ENCODE measurements at regions of chr19 and their contacts with region 1.

Region 1: GRCh38 chr19:13150187-13150930 is at the starts of genes IER2 and STX10:
- DNase-seq: peak; percentile 84 to 95 (median 91)
- ATAC-seq: peak; percentile 54 to 60
- H3K4me3 Mint-ChIP-seq: peak within 1 kb of the TSS; percentile 93 to 99 (median 98)
- H3K27ac Mint-ChIP-seq: peak within 1 kb of the TSS; percentile 92 to 100 (median 98)
- H3K4me1 Mint-ChIP-seq: peaks cover 23 to 44% (median 27%) of the 10 kb centered on the region in 4 donors
- H3K27me3 Mint-ChIP-seq: peaks cover 0 to 3% (median 0%) of the 10 kb centered on the region in 5 donors
- polyA plus RNA-seq, gene IER2: 100 to 162 (median 107) TPM
- polyA plus RNA-seq, gene STX10: 36.1 to 56.2 (median 50.2) TPM

Region 2: GRCh38 chr19:12867120-12868099 is 282.9 kb before region 1 on chr19:
- POLR2A ChIA-PET with region 1: no interaction called
- DNase-seq: peak; percentile 46 to 86 (median 75)
- ATAC-seq: peak; percentile 86 to 89
- H3K4me3 Mint-ChIP-seq: peak overlapping the region; percentile 77 to 94 (median 88)
- H3K27ac Mint-ChIP-seq: peak overlapping the region in 8 of 10 donors; percentile 37 to 92 (median 72)
- H3K4me1 Mint-ChIP-seq: peaks cover 11 to 15% (median 12%) of the 10 kb centered on the region in 4 donors
- H3K27me3 Mint-ChIP-seq: peaks cover 0 to 5% (median 0%) of the 10 kb centered on the region in 5 donors

Region 3: DNA sequence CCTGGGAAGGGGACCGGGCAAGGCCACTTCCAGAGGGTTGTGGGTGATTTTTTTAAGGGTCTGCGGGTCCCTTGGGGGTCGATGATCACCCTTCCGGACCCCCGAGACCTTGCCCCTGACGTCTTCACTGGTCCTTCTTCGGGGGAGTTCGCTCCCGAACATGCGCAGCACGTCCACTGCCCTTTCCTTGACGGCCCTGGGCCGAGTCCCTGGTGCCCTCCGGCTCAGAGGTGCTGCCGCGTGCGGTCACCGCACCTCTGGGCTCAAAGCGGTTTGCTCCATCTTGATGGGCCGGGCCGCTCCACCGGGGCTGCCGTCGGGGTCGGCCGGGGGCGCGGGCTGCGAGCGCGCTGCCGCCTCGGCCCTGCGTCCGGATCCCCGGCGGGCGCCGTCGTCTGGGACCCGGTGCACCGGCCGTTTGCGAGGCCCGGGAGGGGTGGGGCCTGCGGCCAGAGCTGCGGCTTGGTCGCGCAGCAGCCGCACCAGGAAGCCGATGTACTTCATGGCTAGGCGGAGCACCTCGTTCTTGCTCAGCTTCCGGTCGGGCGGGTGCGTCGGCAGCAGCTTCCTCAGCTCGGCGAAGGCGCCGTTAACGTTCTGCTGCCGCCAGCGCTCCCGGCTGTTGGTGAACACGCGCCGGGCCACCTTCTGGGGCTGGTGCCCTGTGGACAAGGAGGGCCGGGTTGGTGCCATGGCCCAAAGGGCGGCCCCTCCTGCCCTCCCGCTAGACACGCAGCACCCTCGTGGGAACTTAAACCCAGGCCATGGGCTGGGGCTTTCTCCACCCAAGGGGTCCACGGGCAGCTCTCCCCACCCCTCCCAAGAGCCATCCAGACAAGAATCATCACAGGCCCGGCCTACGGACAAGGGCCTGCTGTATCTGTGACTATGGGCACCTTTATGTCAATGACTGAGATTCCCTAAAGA is 51.0 kb before region 1 on chr19:
- POLR2A ChIA-PET with region 1: interaction called, 30 read pairs
- DNase-seq: peak; percentile 65 to 89 (median 76)
- ATAC-seq: peak; percentile 68 to 75
- H3K4me3 Mint-ChIP-seq: peak overlapping the region; percentile 60 to 89 (median 79)
- H3K27ac Mint-ChIP-seq: peak overlapping the region; percentile 73 to 97 (median 94)
- H3K4me1 Mint-ChIP-seq: peaks cover 30 to 63% (median 61%) of the 10 kb centered on the region in 4 donors
- H3K27me3 Mint-ChIP-seq: peaks cover 6 to 22% (median 6%) of the 10 kb centered on the region in 5 donors

Region 4: GRCh38 chr19:13117772-13118423 is 32.5 kb before region 1 on chr19 and contains the start of gene NACC1:
- POLR2A ChIA-PET with region 1: interaction called, 68 read pairs
- DNase-seq: peak; percentile 83 to 92 (median 88)
- ATAC-seq: peak; percentile 76 to 83
- H3K4me3 Mint-ChIP-seq: peak within 1 kb of the TSS; percentile 86 to 99 (median 98)
- H3K27ac Mint-ChIP-seq: peak within 1 kb of the TSS; percentile 92 to 98 (median 94)
- H3K4me1 Mint-ChIP-seq: peaks cover 26 to 65% (median 61%) of the 10 kb centered on the region in 4 donors
- H3K27me3 Mint-ChIP-seq: no peaks in the 10 kb centered on the region
- polyA plus RNA-seq, gene NACC1: 1.4 to 3.4 (median 1.9) TPM

Region 5: DNA sequence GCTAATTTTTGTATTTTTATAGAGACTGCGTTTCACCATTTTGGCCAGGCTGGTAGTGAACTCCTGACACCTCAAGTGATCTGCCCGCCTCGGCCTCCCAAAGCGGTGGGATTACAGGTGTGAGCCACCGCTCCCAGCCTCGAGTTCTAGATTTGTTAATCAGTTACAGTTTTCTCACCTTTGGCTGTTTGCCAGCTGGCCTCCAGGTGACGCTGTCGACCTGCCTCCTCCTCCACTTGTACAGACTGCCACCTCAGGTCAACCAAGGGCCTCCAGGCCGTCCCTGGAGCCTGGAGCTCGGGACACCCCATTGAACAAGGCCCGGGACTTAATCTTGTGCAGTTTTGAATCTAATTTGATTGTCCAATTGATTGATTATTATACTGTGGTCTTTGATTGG is 45.3 kb after region 1 on chr19:
- POLR2A ChIA-PET with region 1: interaction called, 108 read pairs
- DNase-seq: peak in 5 of 10 donors; percentile 24 to 39 (median 34)
- ATAC-seq: peak in 1 of 2 donors; percentile 50
- H3K4me3 Mint-ChIP-seq: no peak overlapping the region
- H3K27ac Mint-ChIP-seq: peak overlapping the region in 8 of 10 donors; percentile 15 to 84 (median 60)
- H3K4me1 Mint-ChIP-seq: peaks cover 5 to 34% (median 20%) of the 10 kb centered on the region in 4 donors
- H3K27me3 Mint-ChIP-seq: no peaks in the 10 kb centered on the region

Region 6: GRCh38 chr19:13234518-13234917 is 84.2 kb after region 1 on chr19:
- POLR2A ChIA-PET with region 1: interaction called, 11 read pairs
- DNase-seq: peak; percentile 30 to 89 (median 60)
- ATAC-seq: peak; percentile 89 to 98
- H3K4me3 Mint-ChIP-seq: peak overlapping the region; percentile 43 to 85 (median 68)
- H3K27ac Mint-ChIP-seq: peak overlapping the region in 9 of 10 donors; percentile 52 to 90 (median 78)
- H3K4me1 Mint-ChIP-seq: peaks cover 13 to 19% (median 16%) of the 10 kb centered on the region in 4 donors
- H3K27me3 Mint-ChIP-seq: peaks cover 0 to 4% (median 0%) of the 10 kb centered on the region in 5 donors

Measured in naive thymus-derived CD8-positive, alpha-beta T cell (primary cell).